Heart left ventricle (tissue), 16 donors: ENCODE measurements at regions of chr6 and their contacts with region 1.

Region 1: DNA sequence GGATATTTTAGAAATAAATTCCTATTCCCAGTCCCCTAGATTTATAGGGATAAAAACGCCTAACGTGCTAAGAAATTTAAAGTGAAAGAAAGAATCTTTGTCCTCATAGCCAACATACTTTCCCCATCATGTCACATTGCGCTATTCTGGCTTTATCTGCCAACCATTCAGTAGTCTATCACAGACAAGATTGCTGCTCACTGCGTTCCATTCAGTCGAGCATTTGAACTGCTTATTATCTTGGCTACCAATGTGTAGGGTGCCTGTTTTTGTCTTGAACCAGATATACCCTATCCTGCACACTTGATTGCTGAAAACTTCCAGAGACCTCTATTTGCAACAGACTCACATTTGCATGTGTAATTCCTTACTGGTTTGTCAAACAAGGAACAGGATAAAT is 751.5 kb downstream of the EPHA7 start:
- DNase-seq: peak in 2 of 5 donors; percentile 16 to 29
- ATAC-seq: peak; percentile 91 to 99 (median 98)
- H3K4me3 ChIP-seq: peak overlapping the region in 3 of 12 donors; percentile 0 to 8 (median 4)
- H3K27ac ChIP-seq: peak overlapping the region in 5 of 12 donors; percentile 11 to 63 (median 51)
- H3K4me1 ChIP-seq: peaks cover 0 to 12% (median 2%) of the 10 kb centered on the region in 12 donors
- H3K27me3 ChIP-seq: no peaks in the 10 kb centered on the region
- CTCF ChIP-seq: no peak
- POLR2A ChIP-seq: no peak

Region 2: DNA sequence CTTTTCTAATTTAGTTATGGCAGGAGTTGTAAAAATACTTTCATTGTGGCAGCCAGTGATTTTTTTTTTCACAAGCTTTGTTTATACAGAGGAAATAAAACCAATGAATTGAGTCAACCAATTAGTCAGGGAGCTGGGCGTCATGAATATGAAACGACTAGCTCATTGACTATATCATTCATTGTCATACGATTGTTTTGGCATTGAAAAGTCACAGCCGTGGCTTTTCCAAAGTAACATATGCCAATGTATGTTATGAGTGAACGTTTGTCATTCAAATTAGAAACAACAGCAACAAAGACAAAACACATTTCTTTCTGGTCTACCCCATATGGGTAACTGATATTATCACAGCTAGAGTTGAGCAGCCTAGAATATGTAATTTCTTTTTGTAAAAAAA is 59.1 kb before region 1 on chr6:
- intact Hi-C with region 1: no loop called
- DNase-seq: no peak
- ATAC-seq: no peak
- H3K4me3 ChIP-seq: no peak overlapping the region
- H3K27ac ChIP-seq: no peak overlapping the region
- H3K4me1 ChIP-seq: no peaks in the 10 kb centered on the region
- H3K27me3 ChIP-seq: no peaks in the 10 kb centered on the region
- CTCF ChIP-seq: no peak
- POLR2A ChIP-seq: no peak

Region 3: DNA sequence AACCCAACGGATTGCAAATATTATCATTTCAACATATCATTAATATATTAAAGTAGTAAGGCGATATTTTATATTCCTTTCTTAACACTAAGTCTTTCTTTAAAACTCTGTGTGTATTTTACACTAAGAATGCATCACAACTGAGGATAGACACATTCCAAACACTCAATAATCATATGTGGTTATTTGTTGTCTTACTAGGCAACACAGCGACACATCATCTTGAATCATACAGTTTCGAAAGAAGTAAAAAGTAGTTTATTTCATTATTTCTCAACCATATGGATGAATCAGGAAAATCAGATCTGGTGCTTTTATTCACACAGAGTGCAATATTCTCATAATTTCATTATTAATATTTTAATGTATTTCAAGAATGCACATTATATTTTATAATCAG is 89.1 kb after region 1 on chr6:
- intact Hi-C with region 1: no loop called
- DNase-seq: no peak
- ATAC-seq: no peak
- H3K4me3 ChIP-seq: no peak overlapping the region
- H3K27ac ChIP-seq: no peak overlapping the region
- H3K4me1 ChIP-seq: peaks cover 0 to 9% (median 0%) of the 10 kb centered on the region in 12 donors
- H3K27me3 ChIP-seq: no peaks in the 10 kb centered on the region
- CTCF ChIP-seq: no peak
- POLR2A ChIP-seq: no peak

Region 4: DNA sequence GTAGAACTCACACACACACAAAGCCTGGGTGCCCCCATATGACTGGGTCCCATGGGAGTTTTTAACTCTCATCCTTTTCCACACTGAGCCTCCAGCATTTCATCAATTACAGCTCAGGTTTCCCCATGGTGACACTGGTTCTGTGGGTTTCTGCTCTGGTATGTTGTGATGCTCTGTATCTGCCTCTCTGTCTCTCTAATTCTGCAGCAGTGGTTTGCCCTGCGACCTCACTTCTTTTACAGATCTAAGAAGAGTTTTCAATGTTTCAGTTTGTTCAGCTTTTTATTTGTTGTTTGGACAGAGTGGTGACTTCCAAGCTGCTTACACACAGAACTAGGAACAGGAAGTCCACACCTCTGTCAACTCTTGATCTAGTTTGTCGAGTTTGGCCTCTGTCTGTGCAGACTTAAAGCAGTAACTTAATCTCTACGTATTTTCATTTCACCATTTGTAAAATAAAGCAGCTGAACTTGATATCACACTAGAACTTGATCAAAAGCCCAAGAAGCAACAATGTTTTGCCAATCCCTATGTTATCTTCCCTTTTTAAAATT is 197.2 kb after region 1 on chr6:
- intact Hi-C with region 1: loop called in 1 of 10 experiments (anchors 5 kb)
- DNase-seq: no peak
- ATAC-seq: no peak
- H3K4me3 ChIP-seq: no peak overlapping the region
- H3K27ac ChIP-seq: no peak overlapping the region
- H3K4me1 ChIP-seq: no peaks in the 10 kb centered on the region
- H3K27me3 ChIP-seq: no peaks in the 10 kb centered on the region
- CTCF ChIP-seq: no peak
- POLR2A ChIP-seq: no peak